Uterus (tissue), 4 donors: ENCODE measurements at regions of chr17 and their contacts with region 1.

Region 1: GRCh38 chr17:40358323-40359038 is 6.1 kb downstream of the GJD3 start:
- DNase-seq: peak; percentile 90 to 91
- H3K4me3 ChIP-seq: no peak overlapping the region
- H3K27ac ChIP-seq: peak overlapping the region; percentile 49 to 68
- H3K4me1 ChIP-seq: peaks cover 0 to 3% of the 10 kb centered on the region in 2 donors
- H3K27me3 ChIP-seq: no peaks in the 10 kb centered on the region
- CTCF ChIP-seq: peak; percentile 94 to 98 (median 96)
- POLR2A ChIP-seq: no peak

Region 2: DNA sequence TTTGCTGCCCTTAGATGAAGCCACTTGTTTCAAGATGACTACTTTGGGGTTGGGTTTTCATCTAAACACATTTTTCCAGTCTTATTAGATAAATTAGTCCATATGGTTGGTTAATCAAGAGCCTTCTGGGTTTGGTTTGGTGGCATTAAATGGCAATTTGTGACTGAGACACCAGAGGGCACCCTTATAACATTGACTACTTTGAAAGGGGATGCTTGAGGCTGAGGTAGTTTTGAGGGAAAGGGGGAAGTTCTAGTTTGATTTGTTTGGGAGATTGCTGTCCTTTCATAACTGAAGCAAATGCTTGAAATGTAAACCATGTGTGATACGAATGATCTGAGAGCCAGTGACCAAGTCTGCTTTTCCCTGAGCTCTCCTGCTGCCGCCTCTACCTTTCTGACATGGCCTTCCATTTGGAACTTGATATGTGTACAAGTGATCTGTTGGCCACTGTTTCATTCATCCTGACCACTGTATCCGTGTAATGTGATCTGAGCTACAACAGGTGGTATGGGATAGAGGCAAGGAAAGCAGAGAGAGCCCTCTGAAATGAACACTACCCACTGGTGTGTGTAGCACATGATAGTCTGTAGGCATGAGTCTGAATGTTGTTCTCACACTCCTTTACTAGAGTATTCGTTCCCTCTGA is 55.3 kb before region 1 on chr17:
- intact Hi-C with region 1: loop called (anchors 2 kb)
- DNase-seq: peak; percentile 44 to 66
- H3K4me3 ChIP-seq: no peak overlapping the region
- H3K27ac ChIP-seq: peak overlapping the region; percentile 26 to 66
- H3K4me1 ChIP-seq: no peaks in the 10 kb centered on the region
- H3K27me3 ChIP-seq: no peaks in the 10 kb centered on the region
- CTCF ChIP-seq: peak; percentile 69 to 95 (median 82)
- POLR2A ChIP-seq: no peak

Region 3: DNA sequence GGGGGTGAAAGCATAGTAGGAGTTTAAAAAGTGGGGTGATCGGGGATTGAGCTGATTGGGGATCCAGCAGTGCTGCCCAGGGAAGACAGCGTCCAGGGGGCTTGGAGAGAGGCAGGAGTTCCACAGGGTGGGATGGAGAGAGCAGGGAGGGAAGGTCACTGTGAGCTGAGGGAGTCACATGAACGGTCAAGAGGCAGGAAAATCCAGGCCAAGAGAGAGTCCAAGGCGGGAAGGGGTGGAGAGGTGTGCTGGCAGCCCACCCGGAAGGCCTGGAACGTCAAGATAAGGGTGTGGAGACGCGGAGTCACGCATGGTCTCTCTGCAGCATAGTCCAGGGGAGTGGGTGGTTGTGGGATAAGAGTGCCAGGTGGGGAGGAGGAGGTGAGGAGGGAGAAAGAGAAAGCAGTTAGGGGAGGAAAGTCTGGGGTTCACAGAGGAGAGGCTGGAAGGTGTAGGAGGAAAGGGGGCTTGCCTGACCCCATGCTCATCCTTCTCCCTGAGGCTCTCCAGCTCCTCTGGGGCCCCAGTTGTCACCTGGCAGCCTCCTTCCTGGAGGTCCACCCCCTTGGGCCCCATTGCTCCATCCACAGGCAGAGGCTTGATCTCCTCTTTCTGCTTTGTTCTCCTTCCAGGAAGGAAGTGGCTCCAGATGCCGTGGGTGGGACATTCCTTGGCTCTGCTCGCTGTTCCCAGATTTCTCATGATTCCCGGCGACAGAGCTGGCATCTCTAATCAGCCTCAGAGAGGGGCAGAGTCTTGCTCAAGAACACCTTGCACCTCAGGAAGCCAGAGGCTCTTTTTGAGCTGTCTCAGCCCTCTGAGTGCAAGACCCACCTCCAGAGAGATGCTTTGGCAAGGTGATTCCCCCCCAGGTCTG is 178.1 kb after region 1 on chr17:
- intact Hi-C with region 1: loop called (anchors 10 kb)
- DNase-seq: peak; percentile 62 to 72
- H3K4me3 ChIP-seq: no peak overlapping the region
- H3K27ac ChIP-seq: peak overlapping the region; percentile 93 to 98
- H3K4me1 ChIP-seq: peaks cover 4 to 28% of the 10 kb centered on the region in 2 donors
- H3K27me3 ChIP-seq: no peaks in the 10 kb centered on the region
- CTCF ChIP-seq: no peak
- POLR2A ChIP-seq: no peak